Right cardiac atrium (tissue), 5 donors: ENCODE measurements at regions of chr1 and their contacts with region 1.

Region 1: GRCh38 chr1:32933742-32934322 is 30.8 kb downstream of the RNF19B start:
- DNase-seq: no peak
- ATAC-seq: peak; percentile 62 to 71
- H3K4me3 ChIP-seq: no peak overlapping the region
- H3K27ac ChIP-seq: no peak overlapping the region
- H3K4me1 ChIP-seq: no peaks in the 10 kb centered on the region
- H3K27me3 ChIP-seq: no peaks in the 10 kb centered on the region

Region 2: GRCh38 chr1:32335790-32336590 is 597.8 kb before region 1 on chr1 and contains the start of gene MARCKSL1:
- intact Hi-C with region 1: no loop called
- DNase-seq: peak; percentile 90 to 96 (median 95)
- ATAC-seq: peak; percentile 67 to 71
- H3K4me3 ChIP-seq: peak within 1 kb of the TSS; percentile 93
- H3K27ac ChIP-seq: peak within 1 kb of the TSS; percentile 68
- H3K4me1 ChIP-seq: peaks cover 6% of the 10 kb centered on the region
- H3K27me3 ChIP-seq: no peaks in the 10 kb centered on the region
- total RNA-seq, gene MARCKSL1: 14.5 to 52.7 (median 40.2) TPM

Region 3: GRCh38 chr1:33055210-33056008 is 121.6 kb after region 1 on chr1:
- intact Hi-C with region 1: loop called in 3 of 4 experiments (anchors 2 to 10 kb)
- DNase-seq: peak; percentile 87 to 92 (median 89)
- ATAC-seq: peak; percentile 97
- H3K4me3 ChIP-seq: no peak overlapping the region
- H3K27ac ChIP-seq: peak overlapping the region; percentile 81
- H3K4me1 ChIP-seq: peaks cover 7% of the 10 kb centered on the region
- H3K27me3 ChIP-seq: no peaks in the 10 kb centered on the region

Region 4: DNA sequence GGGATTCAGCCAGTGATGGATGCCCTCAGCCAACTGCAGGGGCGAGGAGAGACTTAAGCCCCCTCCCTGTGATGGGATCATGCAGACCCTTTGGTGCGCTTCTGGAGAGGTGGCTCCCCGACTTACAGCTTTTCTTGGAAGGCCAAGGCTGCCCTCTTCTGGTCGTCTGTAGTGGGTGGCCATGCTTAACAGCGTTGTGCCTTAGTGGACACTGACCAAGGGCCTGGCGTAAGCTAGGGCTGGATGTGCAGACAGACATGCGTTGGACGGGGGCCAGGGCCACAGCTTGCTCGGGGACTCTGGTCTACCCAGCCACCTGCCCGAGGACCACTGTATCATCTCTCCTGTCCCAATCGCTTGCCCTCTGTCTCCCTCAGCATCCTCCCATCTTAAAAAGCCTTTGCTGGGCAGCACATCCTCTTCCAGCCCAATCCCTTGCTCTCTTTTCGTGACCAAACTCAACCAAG is 152.6 kb after region 1 on chr1:
- intact Hi-C with region 1: loop called (anchors 2 to 10 kb)
- DNase-seq: peak; percentile 79 to 92 (median 87)
- ATAC-seq: peak; percentile 81 to 83
- H3K4me3 ChIP-seq: no peak overlapping the region
- H3K27ac ChIP-seq: no peak overlapping the region
- H3K4me1 ChIP-seq: no peaks in the 10 kb centered on the region
- H3K27me3 ChIP-seq: no peaks in the 10 kb centered on the region